ENCODE measurements at regions of chr9 and their contacts with region 1.

Region 1: DNA sequence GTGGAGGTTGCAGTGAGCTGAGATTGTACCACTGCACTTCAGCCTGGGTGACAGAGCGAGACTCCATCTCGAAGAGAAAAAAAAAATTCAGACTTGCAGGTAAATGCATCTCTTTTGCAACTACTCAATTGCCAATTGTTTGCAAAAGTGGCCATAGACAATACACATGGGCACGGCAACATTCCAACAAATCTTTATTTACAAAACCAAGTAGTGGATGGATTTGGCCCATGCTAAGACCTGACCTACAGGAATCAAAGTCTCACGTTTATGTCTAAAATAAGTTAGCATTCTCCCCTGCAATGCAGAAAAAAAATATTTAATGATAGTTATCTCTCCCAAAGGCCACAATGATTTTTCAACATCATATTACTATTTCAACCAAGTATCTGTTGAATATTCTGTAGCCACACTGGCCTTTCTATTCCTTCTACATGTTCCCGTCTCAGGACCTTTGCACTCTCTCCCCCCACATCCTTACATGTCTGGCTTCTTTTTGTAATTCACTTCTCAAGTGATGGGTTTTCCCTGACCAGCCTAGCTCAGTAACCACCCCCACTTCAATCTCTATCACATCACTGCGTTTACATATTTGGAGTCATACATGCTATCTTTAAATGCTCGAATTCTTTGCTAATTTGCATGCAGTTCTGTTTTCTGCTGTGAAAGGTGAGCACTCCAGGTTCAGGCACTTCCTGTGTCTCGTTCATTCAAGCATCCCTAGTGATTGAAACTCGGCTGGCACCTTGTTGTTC is 54.2 kb downstream of the FNBP1 start:
- H3K4me3 Mint-ChIP-seq: no peak overlapping the region
- H3K27ac Mint-ChIP-seq: peak overlapping the region; percentile 12
- H3K4me1 Mint-ChIP-seq: peaks cover 52% of the 10 kb centered on the region
- H3K27me3 Mint-ChIP-seq: no peaks in the 10 kb centered on the region

Region 2: GRCh38 chr9:128420651-128421481 is 1567.9 kb before region 1 on chr9 and contains the start of gene CERCAM:
- intact Hi-C with region 1: no loop called
- H3K4me3 Mint-ChIP-seq: peak within 1 kb of the TSS; percentile 75
- H3K27ac Mint-ChIP-seq: peak within 1 kb of the TSS; percentile 39
- H3K4me1 Mint-ChIP-seq: peaks cover 28% of the 10 kb centered on the region
- H3K27me3 Mint-ChIP-seq: peaks cover 44% of the 10 kb centered on the region

Region 3: GRCh38 chr9:130023144-130023787 is 34.5 kb after region 1 on chr9:
- intact Hi-C with region 1: no loop called
- H3K4me3 Mint-ChIP-seq: no peak overlapping the region
- H3K27ac Mint-ChIP-seq: peak overlapping the region; percentile 41
- H3K4me1 Mint-ChIP-seq: peaks cover 42% of the 10 kb centered on the region
- H3K27me3 Mint-ChIP-seq: no peaks in the 10 kb centered on the region

Region 4: GRCh38 chr9:130039528-130040147 is 50.9 kb after region 1 on chr9:
- intact Hi-C with region 1: loop called (anchors 10 kb)
- H3K4me3 Mint-ChIP-seq: peak overlapping the region; percentile 76
- H3K27ac Mint-ChIP-seq: peak overlapping the region; percentile 98
- H3K4me1 Mint-ChIP-seq: peaks cover 71% of the 10 kb centered on the region
- H3K27me3 Mint-ChIP-seq: no peaks in the 10 kb centered on the region